Activated naive CD4-positive, alpha-beta T cell treated with anti-CD3 and anti-CD28 coated beads for 36 hours (primary cell): ENCODE measurements at regions of chr6 and their contacts with region 1.

Region 1: GRCh38 chr6:6811151-6812002 is 222.9 kb downstream of the LY86 start:
- DNase-seq: peak; percentile 79
- H3K4me3 Mint-ChIP-seq: peak overlapping the region; percentile 66
- H3K27ac Mint-ChIP-seq: peak overlapping the region; percentile 72
- H3K4me1 Mint-ChIP-seq: peaks cover 20% of the 10 kb centered on the region
- H3K27me3 Mint-ChIP-seq: no peaks in the 10 kb centered on the region

Region 2: DNA sequence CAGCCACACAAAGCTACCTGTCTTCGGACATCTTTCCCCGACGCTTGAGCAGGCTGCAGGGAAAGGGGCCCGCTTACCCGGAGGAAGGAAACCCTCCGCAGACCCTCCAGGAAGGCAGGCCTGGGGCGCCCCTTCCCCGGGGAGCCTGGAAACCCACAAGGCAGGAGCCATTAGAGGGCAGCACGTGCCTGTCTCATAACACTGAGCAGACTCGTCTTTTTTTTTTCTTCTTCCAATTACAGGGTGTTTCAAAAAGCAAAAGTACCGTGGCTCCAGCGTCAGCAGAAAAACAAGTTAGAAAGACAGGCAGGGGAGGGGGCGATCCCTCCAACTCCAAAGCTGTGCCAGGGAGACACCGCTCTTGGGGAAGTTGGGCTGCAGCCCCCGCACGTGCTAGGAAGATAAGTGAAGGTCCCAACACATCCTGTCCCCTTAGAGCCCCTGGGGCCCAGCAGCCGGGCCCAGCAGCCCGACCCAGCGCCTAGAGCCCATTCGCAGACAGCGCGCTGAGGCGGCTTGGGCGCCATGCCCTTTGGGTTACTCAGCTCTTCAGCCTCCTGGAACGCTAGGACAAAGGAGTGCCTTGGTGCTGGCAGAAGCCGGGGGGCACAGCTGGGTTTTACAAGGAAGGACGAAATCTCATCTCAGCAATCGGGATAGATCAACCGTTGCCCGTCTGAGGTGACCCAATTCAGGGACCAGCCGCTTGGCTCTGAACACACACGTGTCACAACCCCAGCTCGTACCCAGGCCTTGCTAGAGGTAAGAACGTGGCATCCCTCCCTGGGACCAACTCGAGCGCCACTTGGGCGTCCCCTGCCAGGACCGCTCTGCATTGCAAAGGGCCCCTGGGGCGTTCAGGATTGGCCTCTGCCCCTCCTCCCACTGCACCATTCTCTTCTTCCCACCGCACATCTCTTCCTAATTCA is 86.6 kb before region 1 on chr6:
- CTCF ChIA-PET with region 1: interaction called, 10 read pairs
- intact Hi-C with region 1: no loop called
- DNase-seq: peak; percentile 82
- H3K4me3 Mint-ChIP-seq: peak overlapping the region; percentile 34
- H3K27ac Mint-ChIP-seq: no peak overlapping the region
- H3K4me1 Mint-ChIP-seq: peaks cover 4% of the 10 kb centered on the region
- H3K27me3 Mint-ChIP-seq: no peaks in the 10 kb centered on the region

Region 3: DNA sequence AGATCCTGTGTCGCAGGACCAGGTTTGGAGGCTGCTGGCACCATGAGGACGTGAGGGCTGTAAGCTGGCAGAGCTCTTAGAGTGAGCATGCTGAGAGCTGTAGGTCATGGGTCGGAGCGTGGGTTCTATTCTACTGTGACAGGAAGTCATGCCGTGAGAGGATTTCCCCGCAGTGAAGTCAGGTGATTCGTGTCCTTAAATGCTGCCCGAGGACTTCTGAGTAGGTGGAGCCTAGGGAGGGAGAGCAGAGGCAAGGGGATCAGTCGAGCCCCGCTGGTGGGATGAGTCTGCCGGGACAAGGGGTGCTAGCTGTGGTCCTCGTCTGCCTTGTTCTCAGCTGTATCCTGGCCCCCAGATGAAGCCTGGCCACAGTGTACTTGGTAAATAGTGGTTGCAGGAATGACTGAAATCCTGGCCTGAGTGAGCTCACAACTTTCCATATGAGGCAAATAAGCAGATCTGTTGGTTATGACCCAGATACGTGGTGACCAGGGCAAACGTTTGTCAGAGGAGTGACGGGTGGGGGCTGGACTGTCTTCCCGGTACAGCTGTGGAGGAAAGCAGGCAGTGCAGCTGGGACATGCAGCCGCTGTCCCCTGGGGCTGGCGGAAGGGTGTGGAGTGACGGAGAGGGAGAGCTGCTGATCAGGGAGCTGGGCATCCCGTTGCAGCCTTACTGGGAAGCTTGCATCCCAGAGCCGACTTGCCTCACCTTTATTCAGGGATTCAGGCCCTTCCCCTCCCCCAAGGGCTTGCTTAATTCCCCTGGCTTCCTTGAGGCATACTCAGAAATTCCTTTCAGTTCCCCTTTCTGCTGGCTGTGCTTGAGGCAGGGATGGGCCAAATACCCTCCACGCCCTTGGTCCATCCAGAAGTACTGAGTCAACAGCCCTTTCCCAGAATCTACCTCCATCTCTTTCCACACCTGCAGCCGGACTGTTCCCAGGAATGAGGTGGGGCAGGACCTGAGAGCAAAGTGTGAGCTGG is 45.5 kb after region 1 on chr6:
- CTCF ChIA-PET with region 1: no interaction called
- intact Hi-C with region 1: loop called (anchors 1 kb)
- DNase-seq: peak; percentile 87
- H3K4me3 Mint-ChIP-seq: peak overlapping the region; percentile 53
- H3K27ac Mint-ChIP-seq: peak overlapping the region; percentile 80
- H3K4me1 Mint-ChIP-seq: peaks cover 20% of the 10 kb centered on the region
- H3K27me3 Mint-ChIP-seq: no peaks in the 10 kb centered on the region

Region 4: GRCh38 chr6:7145885-7146828 is 334.8 kb after region 1 on chr6:
- CTCF ChIA-PET with region 1: no interaction called
- intact Hi-C with region 1: loop called (anchors 5 kb)
- DNase-seq: peak; percentile 38
- H3K4me3 Mint-ChIP-seq: peak overlapping the region; percentile 71
- H3K27ac Mint-ChIP-seq: peak overlapping the region; percentile 85
- H3K4me1 Mint-ChIP-seq: peaks cover 79% of the 10 kb centered on the region
- H3K27me3 Mint-ChIP-seq: no peaks in the 10 kb centered on the region